Panc1 (cell line): ENCODE measurements at regions of chr12 and their contacts with region 1.

Region 1: GRCh38 chr12:22083167-22083566 is 37.1 kb downstream of the CMAS start:
- DNase-seq: peak; percentile 12
- ATAC-seq: no peak
- H3K4me3 ChIP-seq: no peak overlapping the region
- H3K27ac ChIP-seq: no peak overlapping the region
- H3K4me1 ChIP-seq: no peaks in the 10 kb centered on the region
- H3K27me3 ChIP-seq: no peaks in the 10 kb centered on the region
- CTCF ChIP-seq: peak; percentile 31; the same call in 1 of the 2 replicates

Region 2: DNA sequence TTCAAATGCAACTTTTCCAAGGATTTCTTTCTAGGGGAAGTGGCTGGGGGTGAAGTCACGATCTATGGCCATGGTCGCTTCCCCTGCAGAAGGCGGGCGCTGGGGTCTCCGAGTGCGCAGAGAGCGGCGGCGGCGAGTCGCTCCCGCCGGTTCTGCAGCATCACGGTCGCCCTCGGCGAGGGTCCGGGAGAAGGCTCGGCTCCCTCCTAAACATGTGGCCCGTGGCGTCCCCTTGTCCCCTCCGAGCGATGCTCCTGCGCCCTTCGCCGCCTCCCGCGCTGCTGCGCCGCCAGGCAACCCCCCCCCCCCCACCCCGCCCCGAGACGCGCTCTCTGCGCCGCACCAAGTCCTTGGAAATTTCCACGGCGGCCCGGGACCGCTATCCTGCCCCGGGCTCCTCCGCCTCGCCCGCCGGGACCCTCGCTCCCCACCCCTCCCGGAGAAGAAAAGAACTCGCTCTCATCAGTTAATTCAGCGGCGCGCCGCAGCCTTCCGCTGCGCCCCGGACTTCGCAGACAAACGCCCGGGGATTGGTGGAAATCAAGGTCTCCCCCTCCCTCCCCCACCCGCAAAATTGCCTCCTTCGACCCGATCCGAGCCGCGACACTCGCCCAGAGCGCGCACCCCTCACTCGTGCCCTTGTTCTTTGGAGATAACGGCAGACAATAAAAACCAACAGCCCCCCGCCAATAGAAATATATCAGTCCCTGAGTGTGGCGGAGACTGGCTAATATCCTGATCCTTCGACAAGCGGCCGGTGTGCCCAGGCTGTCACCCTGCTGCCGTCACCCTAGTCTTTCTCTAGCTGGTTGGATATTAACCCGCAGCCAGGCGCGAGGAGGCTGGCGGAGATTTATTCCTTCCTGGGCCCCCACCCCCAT is 251.5 kb after region 1 on chr12 and contains the start of gene ST8SIA1:
- CTCF ChIA-PET with region 1: interaction called, 6 read pairs
- POLR2A ChIA-PET with region 1: no interaction called
- in situ Hi-C with region 1: no loop called
- intact Hi-C with region 1: loop called (anchors 10 kb)
- DNase-seq: no peak
- ATAC-seq: peak; percentile 64
- H3K4me3 ChIP-seq: peak within 1 kb of the TSS; percentile 41 to 51
- H3K27ac ChIP-seq: no peak within 1 kb of the TSS
- H3K4me1 ChIP-seq: no peaks in the 10 kb centered on the region
- H3K27me3 ChIP-seq: no peaks in the 10 kb centered on the region; the same call in none of the 2 replicates
- CTCF ChIP-seq: no peak
- total RNA-seq, gene ST8SIA1: 0.13 TPM

Region 3: GRCh38 chr12:22459838-22460490 is 376.8 kb after region 1 on chr12:
- CTCF ChIA-PET with region 1: no interaction called
- POLR2A ChIA-PET with region 1: no interaction called
- in situ Hi-C with region 1: no loop called
- intact Hi-C with region 1: loop called (anchors 5 kb)
- DNase-seq: peak; percentile 5
- ATAC-seq: no peak
- H3K4me3 ChIP-seq: no peak overlapping the region
- H3K27ac ChIP-seq: no peak overlapping the region
- H3K4me1 ChIP-seq: no peaks in the 10 kb centered on the region
- H3K27me3 ChIP-seq: no peaks in the 10 kb centered on the region
- CTCF ChIP-seq: peak; percentile 65; the same call in 1 of the 2 replicates